ENCODE measurements at regions of chr17 and their contacts with region 1.

Region 1: GRCh38 chr17:72725433-72726068 is 366.9 kb downstream of the SLC39A11 start:
- DNase-seq: peak; percentile 58
- CTCF ChIP-seq: peak; percentile 86

Region 2: GRCh38 chr17:72705905-72706395 is 19.6 kb before region 1 on chr17:
- CTCF ChIA-PET with region 1: interaction called, 77 read pairs
- POLR2A ChIA-PET with region 1: no interaction called
- DNase-seq: peak; percentile 46
- CTCF ChIP-seq: no peak

Region 3: GRCh38 chr17:72764632-72765041 is 39.1 kb after region 1 on chr17:
- CTCF ChIA-PET with region 1: interaction called, 13 read pairs
- POLR2A ChIA-PET with region 1: no interaction called
- DNase-seq: no peak
- CTCF ChIP-seq: no peak

Region 4: DNA sequence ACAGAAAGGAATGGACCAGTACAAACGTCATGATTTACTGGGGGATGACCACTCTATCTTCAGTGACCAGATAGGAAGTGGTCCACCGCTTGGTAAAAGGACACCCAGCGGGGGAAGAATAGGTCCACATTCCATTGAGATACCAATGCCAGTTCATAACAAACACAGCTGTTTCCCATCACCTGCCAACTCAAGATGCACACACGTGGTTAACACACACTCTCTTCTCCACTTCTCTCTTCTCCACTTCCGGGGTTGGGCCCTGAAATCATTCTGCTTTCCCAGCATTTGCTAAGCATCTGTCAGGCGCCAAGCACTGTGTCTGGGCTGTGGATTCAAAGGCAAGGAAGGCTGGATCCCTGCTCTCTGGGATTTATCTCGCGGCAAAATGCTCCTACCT is 191.4 kb after region 1 on chr17:
- CTCF ChIA-PET with region 1: no interaction called
- POLR2A ChIA-PET with region 1: no interaction called
- DNase-seq: no peak
- CTCF ChIP-seq: no peak

Region 5: DNA sequence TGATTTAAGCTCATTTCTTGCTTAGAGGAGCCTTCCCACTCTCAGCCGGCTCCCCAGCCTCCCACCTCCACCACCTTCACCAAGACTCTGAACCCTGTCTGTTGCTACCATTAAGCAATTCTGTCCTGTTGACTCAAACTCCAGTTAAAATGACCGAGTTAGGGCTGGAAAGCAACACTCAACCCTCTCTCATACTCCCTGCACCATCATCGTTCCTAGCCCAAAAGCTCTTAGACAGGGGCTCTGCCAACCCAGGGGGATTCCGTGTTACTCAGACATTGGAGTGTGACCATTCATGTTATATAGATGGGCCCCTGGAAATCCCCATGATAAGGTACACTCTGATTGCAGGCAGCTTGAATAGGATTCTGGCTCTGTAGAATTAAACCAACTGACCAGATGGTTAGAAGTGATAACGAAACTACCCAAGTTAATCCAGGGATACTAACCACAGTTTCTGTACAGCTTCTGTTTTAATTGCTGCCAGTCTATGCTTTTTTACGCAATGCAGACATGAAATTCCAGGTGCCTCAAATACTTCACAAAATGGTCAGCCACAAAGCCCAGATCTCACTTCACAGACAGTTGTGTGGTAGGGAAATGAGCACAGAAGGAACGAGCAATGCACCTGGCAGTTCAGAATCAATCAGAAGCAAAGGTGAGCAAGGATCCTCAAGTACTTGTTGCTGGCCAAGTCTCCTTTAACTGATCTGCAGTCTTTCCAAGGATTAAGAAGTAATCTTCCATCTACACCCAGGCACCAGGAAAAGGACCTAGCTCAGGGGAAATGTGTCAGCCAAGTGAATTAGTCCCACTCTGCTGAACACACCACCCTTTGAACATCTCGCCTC is 441.4 kb after region 1 on chr17:
- CTCF ChIA-PET with region 1: interaction called, 17 read pairs
- POLR2A ChIA-PET with region 1: no interaction called
- DNase-seq: peak; percentile 30
- CTCF ChIP-seq: no peak

Region 6: DNA sequence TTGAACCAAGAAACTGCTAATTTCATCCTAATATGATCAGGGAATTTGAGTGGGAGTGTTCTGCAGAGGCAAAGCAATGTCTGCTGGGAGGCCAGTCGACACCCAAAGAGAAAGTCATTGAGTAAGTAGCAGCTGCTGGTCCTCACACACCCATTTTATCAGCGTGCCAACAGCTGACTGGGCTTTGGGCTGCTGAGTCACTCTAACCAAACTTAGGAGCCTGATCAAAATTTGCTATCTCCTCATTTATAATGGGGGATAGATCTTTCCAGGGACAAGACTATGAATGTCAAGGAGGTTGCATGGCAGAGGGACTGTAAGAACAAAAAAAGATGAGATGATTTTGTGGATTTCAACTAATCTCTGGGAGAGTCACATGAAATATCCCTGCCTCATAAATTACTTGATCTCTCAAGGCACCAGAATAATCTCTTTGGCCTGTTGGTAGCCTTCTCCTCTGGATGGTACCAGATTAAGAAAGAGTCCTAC is 503.2 kb after region 1 on chr17:
- CTCF ChIA-PET with region 1: interaction called, 15 read pairs
- POLR2A ChIA-PET with region 1: no interaction called
- DNase-seq: peak; percentile 47
- CTCF ChIP-seq: no peak

Region 7: GRCh38 chr17:73371285-73371684 is 645.7 kb after region 1 on chr17:
- CTCF ChIA-PET with region 1: interaction called, 102 read pairs
- POLR2A ChIA-PET with region 1: no interaction called
- DNase-seq: no peak
- CTCF ChIP-seq: no peak

Measured in GM10248 (cell line).